ENCODE measurements at regions of chr10 and their contacts with region 1.

Region 1: DNA sequence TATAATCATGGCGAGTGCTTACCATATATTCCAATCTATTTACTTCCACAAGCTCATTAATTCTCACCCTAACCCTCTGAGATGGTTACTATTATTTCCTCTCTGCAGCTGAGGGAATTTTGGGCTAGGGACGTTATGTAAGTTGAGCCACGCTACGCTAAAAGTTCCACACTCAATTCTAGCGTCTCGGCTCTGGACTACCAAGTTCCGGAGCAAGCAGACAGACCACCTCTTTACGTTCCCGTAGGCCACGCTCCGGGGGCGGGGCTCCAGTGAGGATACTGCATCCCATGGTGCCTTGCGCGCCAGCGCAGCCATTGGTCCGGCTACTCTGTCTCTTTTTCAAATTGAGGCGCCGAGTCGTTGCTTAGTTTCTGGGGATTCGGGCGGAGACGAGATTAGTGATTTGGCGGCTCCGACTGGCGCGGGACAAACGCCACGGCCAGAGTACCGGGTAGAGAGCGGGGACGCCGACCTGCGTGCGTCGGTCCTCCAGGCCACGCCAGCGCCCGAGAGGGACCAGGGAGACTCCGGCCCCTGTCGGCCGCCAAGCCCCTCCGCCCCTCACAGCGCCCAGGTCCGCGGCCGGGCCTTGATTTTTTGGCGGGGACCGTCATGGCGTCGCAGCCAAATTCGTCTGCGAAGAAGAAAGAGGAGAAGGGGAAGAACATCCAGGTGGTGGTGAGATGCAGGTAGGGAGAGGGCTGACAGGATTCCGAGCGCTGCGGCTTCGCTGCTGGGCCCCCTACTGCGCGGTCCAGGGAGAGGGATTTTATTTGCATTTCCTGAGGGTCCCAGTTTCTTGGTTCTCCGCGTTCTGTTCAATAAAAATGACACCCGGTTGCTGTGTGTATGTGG is at the start of gene KIF11:
- DNase-seq: peak; percentile 93
- ATAC-seq: peak; percentile 78
- H3K4me3 ChIP-seq: peak within 1 kb of the TSS; percentile 84 to 92
- H3K27ac ChIP-seq: peak within 1 kb of the TSS; percentile 86
- H3K4me1 ChIP-seq: peaks cover 6 to 19% of the 10 kb centered on the region in 2 experiments; a peak in 3 of 4 replicates
- H3K27me3 ChIP-seq: no peaks in the 10 kb centered on the region
- CTCF ChIP-seq: no peak
- POLR2A ChIP-seq: peak; percentile 98
- RAD21 ChIP-seq: no peak
- total RNA-seq, gene KIF11: 33.8 TPM

Region 2: DNA sequence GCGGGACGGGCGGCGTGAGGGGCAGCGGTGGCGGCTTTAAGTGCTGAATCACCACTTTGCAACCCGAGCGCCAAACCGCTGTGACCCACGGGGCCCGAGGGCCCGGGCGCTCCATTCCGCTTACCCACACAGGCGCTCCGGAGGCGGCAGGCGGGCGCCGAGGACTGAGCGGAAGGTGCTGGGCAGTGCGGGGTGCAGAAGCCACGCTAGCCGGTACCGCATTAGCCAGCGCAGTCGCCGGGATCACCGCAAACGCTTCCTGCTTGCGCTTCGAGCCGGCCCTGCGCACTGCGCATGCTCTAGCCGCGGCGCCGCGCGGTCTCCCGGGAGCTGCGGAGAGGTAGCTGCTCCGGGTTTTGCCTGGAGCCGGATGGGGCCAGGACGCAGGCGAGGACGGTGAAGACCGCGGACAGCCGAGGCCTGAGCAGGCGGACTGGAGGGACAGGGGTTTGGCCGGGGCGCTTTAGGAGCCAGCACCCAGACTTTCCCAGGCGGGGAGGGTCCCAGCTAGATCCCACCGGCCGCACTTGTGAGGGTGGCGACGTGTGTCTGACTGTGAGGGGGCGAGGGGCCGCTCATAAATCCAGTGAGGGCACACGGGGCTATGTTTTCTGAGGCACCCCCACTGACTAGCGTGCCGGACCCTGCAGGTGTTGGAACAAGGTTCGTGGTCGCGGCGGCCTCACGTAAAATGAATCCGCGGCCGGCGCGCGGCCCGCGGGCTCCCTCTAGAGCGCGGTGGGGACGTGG is 19.0 kb before region 1 on chr10 and contains the start of gene IDE:
- CTCF ChIA-PET with region 1: interaction called, 20 read pairs
- POLR2A ChIA-PET with region 1: interaction called, 29 read pairs
- RAD21 ChIA-PET with region 1: interaction called in 1 of 2 experiments, 3 read pairs
- intact Hi-C with region 1: loop called (anchors 2 kb)
- DNase-seq: peak; percentile 77
- ATAC-seq: peak; percentile 80
- H3K4me3 ChIP-seq: peak within 1 kb of the TSS; percentile 74 to 88
- H3K27ac ChIP-seq: peak within 1 kb of the TSS; percentile 97
- H3K4me1 ChIP-seq: peaks cover 17 to 26% of the 10 kb centered on the region in 2 experiments
- H3K27me3 ChIP-seq: no peaks in the 10 kb centered on the region
- CTCF ChIP-seq: peak; percentile 68 to 82 (median 73); a peak in 5 of 6 replicates
- POLR2A ChIP-seq: peak; percentile 73
- RAD21 ChIP-seq: peak; percentile 83
- total RNA-seq, gene IDE: 55.8 TPM

Region 3: DNA sequence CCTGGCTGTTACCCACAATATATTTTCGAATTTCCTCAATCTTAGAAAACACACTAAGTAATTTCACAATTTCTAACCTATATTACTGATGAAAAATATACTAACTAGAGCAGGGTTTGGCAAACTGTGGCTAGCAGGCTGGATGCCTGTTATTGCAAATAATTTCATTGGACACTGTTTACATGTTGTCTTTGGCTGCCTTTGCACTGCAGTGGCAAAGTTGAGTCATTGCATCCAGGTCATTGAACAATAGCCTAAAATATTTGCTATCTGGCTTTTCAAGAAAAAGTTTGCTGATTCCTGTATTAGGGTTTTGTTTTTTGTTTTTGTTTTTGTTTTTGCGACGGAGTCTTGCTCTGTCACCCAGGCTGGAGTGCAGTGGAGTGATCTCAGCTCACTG is 47.1 kb after region 1 on chr10:
- CTCF ChIA-PET with region 1: no interaction called
- POLR2A ChIA-PET with region 1: no interaction called
- RAD21 ChIA-PET with region 1: no interaction called
- intact Hi-C with region 1: loop called (anchors 5 kb)
- DNase-seq: peak; percentile 8
- ATAC-seq: no peak
- H3K4me3 ChIP-seq: no peak overlapping the region
- H3K27ac ChIP-seq: no peak overlapping the region
- H3K4me1 ChIP-seq: peaks cover 6 to 26% of the 10 kb centered on the region in 2 experiments; a peak in 3 of 4 replicates
- H3K27me3 ChIP-seq: no peaks in the 10 kb centered on the region
- CTCF ChIP-seq: no peak
- POLR2A ChIP-seq: no peak
- RAD21 ChIP-seq: no peak

Region 4: GRCh38 chr10:92702301-92702916 is 109.4 kb after region 1 on chr10:
- CTCF ChIA-PET with region 1: no interaction called
- POLR2A ChIA-PET with region 1: no interaction called
- RAD21 ChIA-PET with region 1: no interaction called
- intact Hi-C with region 1: no loop called
- DNase-seq: no peak
- ATAC-seq: no peak
- H3K4me3 ChIP-seq: no peak overlapping the region
- H3K27ac ChIP-seq: no peak overlapping the region
- H3K4me1 ChIP-seq: no peaks in the 10 kb centered on the region
- H3K27me3 ChIP-seq: no peaks in the 10 kb centered on the region
- CTCF ChIP-seq: no peak
- POLR2A ChIP-seq: no peak
- RAD21 ChIP-seq: no peak

Region 5: GRCh38 chr10:92848441-92849233 is 255.6 kb after region 1 on chr10 and contains the start of gene EXOC6:
- CTCF ChIA-PET with region 1: no interaction called
- POLR2A ChIA-PET with region 1: no interaction called
- RAD21 ChIA-PET with region 1: no interaction called
- intact Hi-C with region 1: loop called (anchors 10 kb)
- DNase-seq: peak; percentile 71
- ATAC-seq: peak; percentile 86
- H3K4me3 ChIP-seq: peak within 1 kb of the TSS; percentile 73 to 89
- H3K27ac ChIP-seq: peak within 1 kb of the TSS; percentile 68
- H3K4me1 ChIP-seq: peaks cover 4 to 15% of the 10 kb centered on the region in 2 experiments; a peak in 3 of 4 replicates
- H3K27me3 ChIP-seq: no peaks in the 10 kb centered on the region
- CTCF ChIP-seq: no peak
- POLR2A ChIP-seq: no peak
- RAD21 ChIP-seq: no peak
- total RNA-seq, gene EXOC6: 12.9 TPM

Measured in HCT116 (cell line).